ENCODE measurements at regions of chr3 and their contacts with region 1.

Region 1: DNA sequence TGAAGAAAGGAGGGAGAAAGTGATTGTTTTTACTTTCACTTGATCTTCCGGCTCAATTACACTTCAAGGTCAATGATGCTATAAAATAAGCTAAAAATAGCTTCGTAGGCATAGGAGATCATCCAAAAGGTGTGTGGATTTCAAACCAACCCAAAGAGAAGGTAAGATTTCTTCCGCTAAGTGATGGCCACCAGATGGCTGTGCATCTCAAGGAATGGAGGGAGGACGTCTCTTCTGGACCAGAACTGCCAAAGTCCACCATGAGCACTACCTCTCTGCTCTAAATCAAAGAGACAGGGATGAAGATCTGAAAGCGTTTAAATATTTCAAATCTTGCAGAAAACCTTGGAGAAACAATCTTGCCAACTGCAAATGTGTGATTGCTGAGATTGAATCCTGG is 199.1 kb upstream of the ZPLD1 start:
- DNase-seq: no peak
- H3K4me3 ChIP-seq: no peak overlapping the region
- H3K27ac ChIP-seq: no peak overlapping the region
- H3K4me1 ChIP-seq: peaks cover 9% of the 10 kb centered on the region
- H3K27me3 ChIP-seq: no peaks in the 10 kb centered on the region
- CTCF ChIP-seq: peak; percentile 43 to 61

Region 2: GRCh38 chr3:102299125-102299877 is 63.6 kb after region 1 on chr3:
- CTCF ChIA-PET with region 1: no interaction called
- dilution Hi-C with region 1: no loop called
- in situ Hi-C with region 1: no loop called
- intact Hi-C with region 1: loop called (anchors 2 kb)
- DNase-seq: peak; percentile 93
- H3K4me3 ChIP-seq: no peak overlapping the region
- H3K27ac ChIP-seq: peak overlapping the region; percentile 89
- H3K4me1 ChIP-seq: peaks cover 36% of the 10 kb centered on the region
- H3K27me3 ChIP-seq: no peaks in the 10 kb centered on the region
- CTCF ChIP-seq: no peak

Region 3: GRCh38 chr3:102307429-102307828 is 71.8 kb after region 1 on chr3:
- CTCF ChIA-PET with region 1: no interaction called
- dilution Hi-C with region 1: loop called (anchors 5 kb)
- in situ Hi-C with region 1: no loop called
- intact Hi-C with region 1: no loop called
- DNase-seq: no peak
- H3K4me3 ChIP-seq: no peak overlapping the region
- H3K27ac ChIP-seq: no peak overlapping the region
- H3K4me1 ChIP-seq: no peaks in the 10 kb centered on the region
- H3K27me3 ChIP-seq: no peaks in the 10 kb centered on the region
- CTCF ChIP-seq: no peak

Region 4: DNA sequence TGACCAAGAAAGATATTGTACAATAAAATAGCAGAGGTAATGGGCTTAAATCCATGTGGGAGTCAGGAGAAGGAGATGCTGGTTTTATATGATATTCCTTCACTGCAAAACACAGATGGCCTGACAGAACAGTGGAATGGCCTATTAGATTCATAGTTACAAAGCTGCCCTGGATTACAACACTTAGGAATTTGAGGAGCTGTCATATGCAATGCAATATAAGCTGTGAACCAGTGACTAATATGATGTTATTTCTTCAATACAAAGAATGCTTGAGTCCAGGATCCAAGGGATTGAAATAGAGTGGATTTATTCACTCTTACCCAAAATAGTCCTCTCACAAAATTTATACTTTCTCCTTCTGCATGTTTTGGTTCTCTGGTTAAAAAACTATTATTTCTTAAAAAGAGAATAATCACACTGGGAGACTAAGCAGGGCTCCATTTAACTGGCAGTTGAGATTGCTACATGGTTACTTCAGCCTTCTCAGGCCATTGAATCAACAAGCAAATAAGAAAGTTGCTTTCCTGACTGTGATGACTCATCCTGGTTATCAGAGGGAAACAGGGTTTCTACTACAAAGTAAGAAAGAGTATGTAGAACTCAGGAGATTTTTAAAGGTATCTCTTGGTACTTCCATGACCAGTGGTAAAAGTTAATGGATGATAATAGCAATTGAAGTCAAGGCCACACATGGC is 119.3 kb after region 1 on chr3:
- CTCF ChIA-PET with region 1: no interaction called
- dilution Hi-C with region 1: no loop called
- in situ Hi-C with region 1: no loop called
- intact Hi-C with region 1: loop called (anchors 10 kb)
- DNase-seq: peak; percentile 76
- H3K4me3 ChIP-seq: no peak overlapping the region
- H3K27ac ChIP-seq: peak overlapping the region; percentile 72
- H3K4me1 ChIP-seq: peaks cover 27% of the 10 kb centered on the region
- H3K27me3 ChIP-seq: no peaks in the 10 kb centered on the region
- CTCF ChIP-seq: no peak

Region 5: GRCh38 chr3:102400766-102401165 is 165.1 kb after region 1 on chr3:
- CTCF ChIA-PET with region 1: no interaction called
- dilution Hi-C with region 1: no loop called
- in situ Hi-C with region 1: no loop called
- intact Hi-C with region 1: loop called (anchors 5 kb)
- DNase-seq: peak; percentile 88
- H3K4me3 ChIP-seq: no peak overlapping the region
- H3K27ac ChIP-seq: peak overlapping the region; percentile 79
- H3K4me1 ChIP-seq: peaks cover 21% of the 10 kb centered on the region
- H3K27me3 ChIP-seq: no peaks in the 10 kb centered on the region
- CTCF ChIP-seq: no peak

Region 6: DNA sequence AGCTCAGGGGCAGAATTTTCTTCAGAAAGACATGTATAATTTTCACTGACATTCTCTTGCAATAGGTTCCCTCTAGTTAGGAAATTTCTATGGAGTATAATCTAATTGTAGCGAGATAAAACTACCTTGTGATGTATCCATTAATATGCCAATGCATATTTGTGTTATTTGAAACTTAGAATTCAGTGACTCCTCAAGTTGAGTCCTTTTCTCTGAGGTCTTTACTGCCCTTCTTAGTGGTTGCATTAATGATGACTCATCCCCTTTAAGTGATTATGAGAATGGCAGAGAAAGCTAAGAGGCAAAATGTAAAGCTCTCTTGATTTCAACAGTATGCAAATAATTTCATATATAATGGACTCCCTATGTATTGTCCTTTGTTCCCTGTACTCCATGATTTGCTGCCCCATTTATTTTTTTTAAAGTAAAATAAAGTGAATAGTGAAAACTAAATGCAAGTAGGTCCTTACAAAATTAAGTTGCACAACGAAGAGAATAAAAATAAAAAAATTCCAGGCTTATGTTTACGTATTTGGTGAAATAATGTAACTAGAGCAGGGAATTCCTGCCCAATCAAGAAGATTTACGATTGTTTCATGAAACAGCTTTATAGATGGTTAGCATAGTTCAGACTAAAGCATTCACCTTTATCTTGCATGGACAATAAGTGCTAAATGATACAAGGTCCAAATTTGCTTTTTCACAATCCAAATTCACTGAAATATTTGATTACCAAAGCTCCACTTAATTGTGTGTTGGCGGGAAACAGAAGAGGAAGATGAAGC is 277.2 kb after region 1 on chr3:
- CTCF ChIA-PET with region 1: no interaction called
- dilution Hi-C with region 1: no loop called
- in situ Hi-C with region 1: no loop called
- intact Hi-C with region 1: no loop called
- DNase-seq: peak; percentile 27
- H3K4me3 ChIP-seq: no peak overlapping the region
- H3K27ac ChIP-seq: no peak overlapping the region
- H3K4me1 ChIP-seq: no peaks in the 10 kb centered on the region
- H3K27me3 ChIP-seq: no peaks in the 10 kb centered on the region
- CTCF ChIP-seq: no peak

Region 7: DNA sequence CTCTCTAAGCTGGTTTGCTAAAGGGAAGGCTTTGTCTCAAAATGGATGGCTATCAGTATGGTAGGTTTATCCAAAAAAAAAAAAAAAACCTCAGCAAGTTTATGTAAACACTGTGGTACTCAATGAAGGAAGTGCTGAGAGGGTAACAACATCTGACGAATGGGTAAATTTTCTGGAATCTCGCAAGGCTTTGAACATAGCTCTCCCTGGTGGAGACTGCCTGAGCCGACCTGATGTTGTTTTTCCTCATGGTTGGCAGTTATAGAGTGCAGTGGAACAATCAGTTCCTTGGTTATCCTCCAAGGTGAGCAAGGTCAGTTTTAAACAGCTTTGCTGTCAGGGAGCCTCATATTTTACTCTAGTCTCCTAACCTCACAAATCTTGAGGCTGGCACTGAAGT is 293.8 kb after region 1 on chr3:
- CTCF ChIA-PET with region 1: interaction called, 4 read pairs
- dilution Hi-C with region 1: loop called (anchors 5 kb)
- in situ Hi-C with region 1: no loop called
- intact Hi-C with region 1: no loop called
- DNase-seq: peak; percentile 15
- H3K4me3 ChIP-seq: no peak overlapping the region
- H3K27ac ChIP-seq: no peak overlapping the region
- H3K4me1 ChIP-seq: peaks cover 9% of the 10 kb centered on the region
- H3K27me3 ChIP-seq: no peaks in the 10 kb centered on the region
- CTCF ChIP-seq: peak; percentile 27 to 57

Region 8: DNA sequence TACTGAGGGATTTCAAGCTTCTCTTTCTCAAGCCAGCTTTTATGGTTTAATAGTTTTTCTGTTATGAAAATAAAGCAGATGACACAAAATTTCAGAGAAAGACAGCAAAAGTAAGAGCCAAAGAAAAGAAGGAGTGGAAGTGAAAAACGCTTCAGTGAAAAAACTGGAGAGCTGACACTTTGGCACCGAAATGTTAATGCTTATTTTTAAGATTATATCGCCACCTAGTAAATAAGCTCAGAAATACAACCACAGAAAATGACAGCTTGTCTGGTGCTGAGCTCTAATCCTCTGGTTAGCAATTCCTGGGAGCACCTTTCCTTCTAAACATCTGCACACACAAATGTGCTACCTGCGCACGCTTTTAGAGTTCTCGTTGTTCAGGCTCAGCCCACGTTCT is 300.8 kb after region 1 on chr3:
- CTCF ChIA-PET with region 1: no interaction called
- dilution Hi-C with region 1: loop called (anchors 5 kb)
- in situ Hi-C with region 1: loop called in 1 of 2 experiments (anchors 5 kb)
- intact Hi-C with region 1: loop called (anchors 1 kb)
- DNase-seq: peak; percentile 39
- H3K4me3 ChIP-seq: no peak overlapping the region
- H3K27ac ChIP-seq: no peak overlapping the region
- H3K4me1 ChIP-seq: no peaks in the 10 kb centered on the region
- H3K27me3 ChIP-seq: no peaks in the 10 kb centered on the region
- CTCF ChIP-seq: peak; percentile 42 to 55